ENCODE measurements at regions of chr18 and their contacts with region 1.

Region 1: GRCh38 chr18:27185025-27185763 is at the start of gene CHST9:
- DNase-seq: peak; percentile 79
- H3K4me3 Mint-ChIP-seq: peak within 1 kb of the TSS; percentile 99
- H3K27ac Mint-ChIP-seq: peak within 1 kb of the TSS; percentile 92
- H3K4me1 Mint-ChIP-seq: peaks cover 64% of the 10 kb centered on the region
- H3K27me3 Mint-ChIP-seq: no peaks in the 10 kb centered on the region
- CTCF ChIP-seq: no peak
- total RNA-seq, gene CHST9: 50.4 and 56.9 TPM in 2 replicates

Region 2: GRCh38 chr18:26813043-26813442 is 372.2 kb before region 1 on chr18:
- CTCF ChIA-PET with region 1: no interaction called
- intact Hi-C with region 1: loop called (anchors 10 kb)
- DNase-seq: peak; percentile 54
- H3K4me3 Mint-ChIP-seq: no peak overlapping the region
- H3K27ac Mint-ChIP-seq: no peak overlapping the region
- H3K4me1 Mint-ChIP-seq: peaks cover 30% of the 10 kb centered on the region
- H3K27me3 Mint-ChIP-seq: no peaks in the 10 kb centered on the region
- CTCF ChIP-seq: peak; percentile 61

Region 3: DNA sequence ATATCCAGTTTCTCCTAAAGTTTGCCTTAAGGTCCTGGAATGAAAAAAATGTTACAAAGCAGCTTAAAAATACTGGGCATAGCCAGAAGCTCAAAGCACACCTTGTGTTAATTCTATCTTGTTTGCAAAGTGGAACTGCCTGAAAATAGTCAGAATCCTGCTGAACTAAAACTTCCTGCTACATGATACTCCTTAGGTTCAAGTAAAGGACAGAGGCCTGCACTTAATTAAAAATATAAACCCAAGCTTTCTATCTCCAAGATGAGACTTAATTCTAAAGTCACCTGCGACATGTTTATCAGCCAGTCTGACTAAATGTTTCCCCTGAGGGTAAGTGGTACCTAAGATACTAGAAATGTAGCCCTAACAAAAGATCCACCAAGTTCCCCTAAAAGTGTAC is 103.5 kb before region 1 on chr18:
- CTCF ChIA-PET with region 1: no interaction called
- intact Hi-C with region 1: loop called (anchors 5 kb)
- DNase-seq: no peak
- H3K4me3 Mint-ChIP-seq: no peak overlapping the region
- H3K27ac Mint-ChIP-seq: no peak overlapping the region
- H3K4me1 Mint-ChIP-seq: peaks cover 59% of the 10 kb centered on the region
- H3K27me3 Mint-ChIP-seq: no peaks in the 10 kb centered on the region
- CTCF ChIP-seq: no peak

Region 4: GRCh38 chr18:27143580-27144287 is 41.5 kb before region 1 on chr18:
- CTCF ChIA-PET with region 1: no interaction called
- intact Hi-C with region 1: loop called (anchors 2 kb)
- DNase-seq: peak; percentile 56
- H3K4me3 Mint-ChIP-seq: peak overlapping the region; percentile 14
- H3K27ac Mint-ChIP-seq: peak overlapping the region; percentile 72
- H3K4me1 Mint-ChIP-seq: peaks cover 26% of the 10 kb centered on the region
- H3K27me3 Mint-ChIP-seq: no peaks in the 10 kb centered on the region
- CTCF ChIP-seq: no peak

Region 5: DNA sequence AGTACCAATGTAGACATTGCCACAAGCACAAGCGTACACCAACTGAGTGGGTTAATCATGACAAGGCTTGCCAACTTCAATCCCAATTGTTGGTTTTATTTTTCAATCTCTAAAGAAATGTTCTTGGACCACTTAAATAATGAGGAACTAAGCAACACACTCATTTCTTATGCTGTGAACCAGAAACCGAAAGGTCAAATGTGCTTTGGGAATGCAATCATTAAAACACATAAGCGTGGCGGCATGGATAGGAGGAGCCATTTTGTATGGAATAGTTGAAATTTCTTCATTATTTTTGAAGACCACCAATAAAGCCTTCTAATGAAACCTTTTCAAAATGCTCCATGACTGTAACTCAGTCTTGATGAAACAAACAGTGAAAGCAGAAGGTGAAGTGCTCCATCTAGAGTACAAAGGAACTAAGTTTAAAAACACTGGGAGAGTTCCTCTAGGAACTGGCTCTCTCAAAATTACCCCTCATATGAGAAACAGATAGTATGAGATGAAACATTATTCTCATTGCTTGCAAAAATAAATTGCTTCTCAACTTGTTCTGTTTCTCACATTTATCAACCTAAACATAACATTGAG is 113.1 kb after region 1 on chr18:
- CTCF ChIA-PET with region 1: no interaction called
- intact Hi-C with region 1: loop called (anchors 5 kb)
- DNase-seq: no peak
- H3K4me3 Mint-ChIP-seq: no peak overlapping the region
- H3K27ac Mint-ChIP-seq: no peak overlapping the region
- H3K4me1 Mint-ChIP-seq: peaks cover 7% of the 10 kb centered on the region
- H3K27me3 Mint-ChIP-seq: no peaks in the 10 kb centered on the region
- CTCF ChIP-seq: peak; percentile 29

Measured in Calu3 (cell line).